Right ventricle myocardium inferior (tissue), 1 donor: ENCODE measurements at regions of chr6 and their contacts with region 1.

Region 1: GRCh38 chr6:11869672-11870340 is 91.2 kb upstream of the ADTRP start:
- DNase-seq: no peak
- ATAC-seq: peak; percentile 72

Region 2: DNA sequence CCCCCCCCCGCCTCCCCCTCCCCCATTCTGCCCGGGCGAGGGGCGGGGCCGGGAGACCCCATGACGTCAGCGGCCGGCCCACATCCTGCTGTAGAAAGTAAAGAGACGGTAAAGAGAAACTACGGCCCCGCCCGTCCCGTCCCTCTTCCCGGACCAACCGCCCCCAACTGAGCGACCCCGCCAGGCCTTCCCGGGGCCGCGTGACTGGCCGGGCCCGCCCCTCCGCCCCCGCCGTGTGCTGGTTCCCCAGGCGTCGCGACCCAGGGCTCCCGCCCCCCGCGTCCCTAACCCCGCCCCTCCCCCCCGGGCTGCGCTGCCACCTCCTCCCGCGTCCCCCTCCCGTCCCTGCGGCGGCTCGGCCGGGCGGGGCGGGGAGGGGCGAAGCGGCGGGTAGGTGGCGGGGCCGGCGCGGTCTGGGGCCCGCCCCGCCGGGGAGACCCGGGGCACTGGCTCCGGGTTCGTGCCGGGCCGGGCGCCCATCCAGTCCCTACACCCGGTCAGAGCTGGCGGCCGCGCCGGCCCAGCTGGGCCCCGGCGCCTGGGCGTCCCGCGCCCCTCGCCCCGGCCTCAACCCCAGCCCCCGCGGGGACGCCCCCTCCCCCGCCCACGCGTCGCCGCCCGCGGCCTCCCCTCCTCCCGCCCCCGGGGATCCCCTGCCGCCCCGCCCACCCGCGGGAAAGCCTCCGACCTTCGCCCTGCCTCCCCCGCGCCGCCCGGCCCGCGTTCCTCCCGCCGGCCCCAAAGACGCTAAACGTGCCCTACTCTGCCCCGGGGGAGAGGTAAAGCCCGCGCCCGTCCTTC is 141.7 kb after region 1 on chr6:
- intact Hi-C with region 1: loop called (anchors 5 kb)
- DNase-seq: peak; percentile 99
- ATAC-seq: peak; percentile 96